AG04449 (cell line): ENCODE measurements at regions of chr22 and their contacts with region 1.

Region 1: DNA sequence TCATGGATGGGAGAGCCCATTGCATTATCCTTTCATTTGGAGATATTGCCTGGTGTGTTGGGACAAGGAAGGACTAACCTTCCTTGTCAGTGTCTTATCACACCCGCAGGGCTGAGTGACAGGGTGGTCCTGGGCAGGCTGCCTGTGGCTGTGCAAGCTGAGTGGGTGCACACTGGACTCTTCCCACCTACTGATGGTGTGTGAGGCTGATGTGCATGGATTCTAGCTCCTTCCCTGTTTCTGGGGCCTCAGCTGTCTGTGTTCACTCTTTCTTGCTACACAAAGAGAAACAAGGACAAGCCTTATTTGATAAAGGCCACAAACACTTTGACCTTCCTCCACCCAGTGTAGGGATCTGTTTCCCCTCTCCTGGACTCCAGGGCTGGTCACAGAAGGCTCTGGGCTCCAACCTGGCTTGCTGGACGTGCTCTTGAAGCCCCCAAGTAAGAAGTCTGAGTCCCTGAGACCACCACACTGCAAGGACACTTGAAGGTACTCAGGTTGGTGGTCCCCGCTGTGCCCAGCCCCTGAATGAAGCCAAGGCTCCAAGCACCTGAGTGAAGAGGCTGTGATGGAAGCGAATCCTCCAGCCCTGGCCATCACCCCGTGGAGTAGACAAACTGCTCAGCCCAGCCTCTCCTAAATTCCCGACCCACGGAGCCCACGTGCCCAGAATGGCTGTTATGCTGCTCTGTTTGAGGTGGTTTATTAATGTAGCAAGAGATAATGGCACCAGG is 22.1 kb downstream of the TBX1 start:
- DNase-seq: no peak
- H3K4me3 ChIP-seq: no peak overlapping the region
- CTCF ChIP-seq: no peak

Region 2: DNA sequence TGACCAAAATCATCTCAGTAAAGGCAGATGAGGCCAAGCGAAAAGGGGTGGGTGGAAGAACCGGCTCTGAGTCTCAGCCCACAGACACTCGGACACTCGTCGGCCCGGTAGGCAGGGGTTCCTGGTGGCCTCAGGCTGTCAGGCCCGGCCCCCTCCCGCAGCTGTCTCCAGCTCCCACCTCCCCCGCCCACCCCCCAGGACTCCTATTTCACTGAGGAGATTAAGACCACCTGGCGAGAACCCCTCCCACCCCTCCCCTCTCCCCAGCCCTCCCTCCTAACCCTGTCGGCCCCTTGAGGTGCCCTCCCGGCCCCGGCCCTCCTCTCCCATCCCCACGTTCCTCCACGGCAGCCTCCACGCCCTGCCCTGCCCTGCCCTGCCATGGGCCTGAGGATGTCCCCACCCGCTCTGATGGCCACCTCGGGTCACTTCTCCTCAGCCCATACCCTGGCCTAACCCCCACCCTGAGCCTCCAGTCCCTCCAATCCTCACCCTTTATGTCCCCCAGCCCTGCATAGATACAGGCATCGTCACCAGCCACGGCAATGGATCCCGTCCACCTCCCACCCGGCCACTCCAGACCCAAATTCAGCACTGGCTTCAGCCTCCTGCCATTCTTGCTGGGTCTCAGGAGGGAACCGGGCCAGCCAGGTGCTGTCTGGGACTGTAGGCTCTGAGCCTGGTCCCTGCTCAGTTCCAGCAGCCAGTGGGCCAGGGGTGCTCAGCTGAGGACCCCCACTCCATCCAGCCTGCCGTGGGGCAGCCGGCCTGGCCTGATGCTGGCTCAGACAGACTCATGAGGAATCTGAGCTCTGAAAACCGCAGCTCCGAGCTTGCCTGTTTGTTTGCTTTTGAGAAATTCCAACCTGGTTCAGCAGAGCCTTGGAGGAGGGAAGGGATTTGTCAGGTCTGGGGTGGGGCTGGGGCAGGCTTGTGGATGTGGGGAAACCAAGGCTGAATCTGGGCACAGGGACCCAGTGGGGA is 31.9 kb before region 1 on chr22:
- CTCF ChIA-PET with region 1: no interaction called
- POLR2A ChIA-PET with region 1: no interaction called
- DNase-seq: no peak
- H3K4me3 ChIP-seq: no peak overlapping the region
- CTCF ChIP-seq: no peak

Region 3: DNA sequence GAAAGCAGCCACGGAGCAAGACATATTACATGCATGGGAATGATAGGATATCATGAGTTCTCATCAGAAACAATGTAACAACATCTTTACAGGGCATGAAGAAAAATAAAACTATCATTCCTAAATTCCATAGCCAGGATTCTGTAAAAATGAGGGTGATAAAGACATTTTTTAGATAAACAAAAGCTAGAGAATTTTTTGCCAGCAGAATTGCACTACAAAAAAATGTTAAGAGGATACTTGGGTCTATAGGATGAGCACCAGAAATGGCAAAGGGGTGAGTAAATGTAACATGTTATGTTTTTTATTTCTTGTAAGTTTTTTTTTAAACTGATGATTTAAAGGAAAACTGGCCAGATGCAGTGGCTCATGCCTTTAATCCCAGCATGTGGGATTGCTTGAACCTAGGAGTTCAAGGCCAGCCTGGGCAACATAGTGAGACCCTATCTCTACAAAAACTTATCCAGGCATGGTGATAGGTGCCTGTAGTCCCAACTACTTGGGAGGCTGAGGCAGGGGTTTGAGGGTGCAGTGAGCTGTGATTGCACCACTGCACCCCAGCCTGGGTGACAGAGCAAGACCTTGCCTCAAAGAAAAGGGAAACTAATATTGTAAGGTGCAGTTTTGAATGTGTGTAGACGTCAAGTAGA is 11.1 kb after region 1 on chr22:
- CTCF ChIA-PET with region 1: interaction called, 12 read pairs
- POLR2A ChIA-PET with region 1: no interaction called
- DNase-seq: no peak
- H3K4me3 ChIP-seq: no peak overlapping the region
- CTCF ChIP-seq: no peak